ENCODE measurements at regions of chr20 and their contacts with region 1.

Region 1: DNA sequence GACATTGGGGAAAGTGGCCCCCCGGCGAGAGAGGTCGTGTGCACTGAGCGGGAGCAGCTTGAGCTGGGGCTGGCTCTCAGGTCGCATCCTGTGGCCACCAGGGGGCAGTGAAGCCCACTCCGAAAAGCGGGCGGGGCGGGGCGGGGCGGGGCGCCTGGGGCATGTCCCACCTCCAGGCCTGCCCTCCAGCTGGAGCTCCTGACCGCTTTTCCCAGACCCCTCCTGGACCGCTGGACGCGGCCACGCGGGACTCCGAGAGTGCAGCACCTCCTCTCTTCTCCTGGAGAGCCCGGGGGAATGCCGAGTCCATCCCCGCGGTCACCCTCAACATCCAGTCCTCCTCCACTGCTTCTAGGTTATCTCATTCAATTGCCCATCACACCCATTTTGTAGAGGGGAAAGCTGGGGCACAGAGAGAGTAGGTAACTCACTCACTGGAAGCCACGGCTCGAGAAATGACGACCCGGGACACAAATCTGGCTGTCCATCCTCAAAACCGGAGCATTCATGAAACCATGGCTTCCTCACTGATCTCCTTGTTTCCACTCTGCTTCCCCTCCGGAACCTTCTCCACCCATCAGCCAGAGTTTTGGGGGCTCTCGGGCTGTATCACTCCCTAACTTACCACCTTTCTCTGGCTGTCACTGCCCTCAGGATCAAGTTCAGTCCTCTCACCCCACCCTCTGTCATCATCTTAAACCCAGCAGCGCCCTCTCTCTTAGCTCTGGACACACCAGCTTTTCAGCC is 24.1 kb downstream of the COX4I2 start:
- H3K4me3 ChIP-seq: peak overlapping the region; percentile 23
- H3K27ac ChIP-seq: no peak overlapping the region
- H3K4me1 ChIP-seq: no peaks in the 10 kb centered on the region
- CTCF ChIP-seq: peak; percentile 76

Region 2: GRCh38 chr20:31485450-31486339 is 176.1 kb before region 1 on chr20:
- CTCF ChIA-PET with region 1: no interaction called
- POLR2A ChIA-PET with region 1: no interaction called
- H3K4me3 ChIP-seq: no peak overlapping the region
- H3K27ac ChIP-seq: no peak overlapping the region
- H3K4me1 ChIP-seq: no peaks in the 10 kb centered on the region
- CTCF ChIP-seq: no peak

Region 3: DNA sequence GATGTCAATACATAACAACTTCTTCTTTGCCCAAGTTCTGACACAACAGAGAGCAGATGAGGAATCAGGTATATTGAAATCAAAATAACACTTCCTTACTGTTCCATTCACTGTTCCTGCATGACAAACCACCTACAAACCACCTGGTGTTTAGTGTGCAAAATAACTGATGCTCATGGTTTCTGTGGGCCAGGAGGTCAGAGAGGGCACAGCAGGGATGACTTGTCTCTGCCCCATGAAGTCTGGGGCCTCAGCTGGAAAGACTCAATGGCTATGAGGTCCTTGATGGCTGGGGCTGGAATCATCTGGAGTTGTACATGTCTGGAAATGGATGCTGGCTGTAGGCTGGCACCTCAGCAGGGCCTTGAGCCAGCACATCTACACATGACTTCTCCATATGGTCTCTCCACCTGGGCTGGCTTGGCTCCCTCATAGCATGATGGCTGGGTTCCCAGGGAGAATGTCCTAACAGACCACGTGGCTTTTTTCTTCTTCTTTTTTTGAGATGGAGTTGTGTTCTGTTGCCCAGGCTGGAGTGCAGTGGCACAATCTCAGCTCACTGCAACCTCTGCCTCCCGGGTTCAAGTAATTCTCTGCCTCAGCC is 31.5 kb before region 1 on chr20:
- CTCF ChIA-PET with region 1: interaction called, 14 read pairs
- POLR2A ChIA-PET with region 1: no interaction called
- H3K4me3 ChIP-seq: no peak overlapping the region
- H3K27ac ChIP-seq: no peak overlapping the region
- H3K4me1 ChIP-seq: no peaks in the 10 kb centered on the region
- CTCF ChIP-seq: no peak

Region 4: GRCh38 chr20:31674895-31675827 is 13.4 kb after region 1 on chr20:
- CTCF ChIA-PET with region 1: interaction called, 17 read pairs
- POLR2A ChIA-PET with region 1: interaction called, 3 read pairs
- H3K4me3 ChIP-seq: no peak overlapping the region
- H3K27ac ChIP-seq: peak overlapping the region; percentile 0; the same call in 1 of the 2 replicates
- H3K4me1 ChIP-seq: peaks cover 14% of the 10 kb centered on the region
- CTCF ChIP-seq: no peak

Region 5: GRCh38 chr20:31684153-31685015 is 22.6 kb after region 1 on chr20:
- CTCF ChIA-PET with region 1: interaction called, 13 read pairs
- POLR2A ChIA-PET with region 1: no interaction called
- H3K4me3 ChIP-seq: no peak overlapping the region
- H3K27ac ChIP-seq: no peak overlapping the region
- H3K4me1 ChIP-seq: no peaks in the 10 kb centered on the region
- CTCF ChIP-seq: no peak

Region 6: GRCh38 chr20:31698803-31699718 is 37.3 kb after region 1 on chr20:
- CTCF ChIA-PET with region 1: interaction called, 10 read pairs
- POLR2A ChIA-PET with region 1: interaction called, 6 read pairs
- H3K4me3 ChIP-seq: no peak overlapping the region
- H3K27ac ChIP-seq: no peak overlapping the region
- H3K4me1 ChIP-seq: peaks cover 3% of the 10 kb centered on the region; the same call in 1 of the 2 replicates
- CTCF ChIP-seq: no peak